CD8-positive, alpha-beta memory T cell (primary cell): ENCODE measurements at regions of chr15 and their contacts with region 1.

Region 1: GRCh38 chr15:90233376-90234095 is at the start of gene CIB1:
- DNase-seq: peak; percentile 94 to 99 (median 97)
- H3K4me3 ChIP-seq: peak within 1 kb of the TSS; percentile 90
- H3K4me3 Mint-ChIP-seq: peak within 1 kb of the TSS; percentile 84 to 98 (median 91)
- H3K27ac ChIP-seq: peak within 1 kb of the TSS; percentile 92
- H3K27ac Mint-ChIP-seq: peak within 1 kb of the TSS; percentile 96 to 100 (median 100)
- H3K4me1 ChIP-seq: peaks cover 51% of the 10 kb centered on the region
- H3K4me1 Mint-ChIP-seq: peaks cover 57 to 65% (median 60%) of the 10 kb centered on the region in 3 donors
- H3K27me3 ChIP-seq: no peaks in the 10 kb centered on the region
- H3K27me3 Mint-ChIP-seq: peaks cover 0 to 1% of the 10 kb centered on the region in 2 donors
- total RNA-seq, gene CIB1: 162 to 166 TPM

Region 2: GRCh38 chr15:90101969-90102890 is 131.3 kb before region 1 on chr15 and contains the start of gene IDH2:
- CTCF ChIA-PET with region 1: interaction called, 4 read pairs
- POLR2A ChIA-PET with region 1: interaction called, 11 read pairs
- DNase-seq: peak; percentile 67 to 79 (median 73)
- H3K4me3 ChIP-seq: peak within 1 kb of the TSS; percentile 68
- H3K4me3 Mint-ChIP-seq: peak within 1 kb of the TSS; percentile 88 to 98 (median 92)
- H3K27ac ChIP-seq: peak within 1 kb of the TSS; percentile 63
- H3K27ac Mint-ChIP-seq: peak within 1 kb of the TSS; percentile 96 to 100 (median 99)
- H3K4me1 ChIP-seq: peaks cover 44% of the 10 kb centered on the region
- H3K4me1 Mint-ChIP-seq: peaks cover 47 to 57% (median 54%) of the 10 kb centered on the region in 3 donors
- H3K27me3 ChIP-seq: no peaks in the 10 kb centered on the region
- H3K27me3 Mint-ChIP-seq: no peaks in the 10 kb centered on the region
- total RNA-seq, gene IDH2: 72.8 to 73.8 TPM

Region 3: DNA sequence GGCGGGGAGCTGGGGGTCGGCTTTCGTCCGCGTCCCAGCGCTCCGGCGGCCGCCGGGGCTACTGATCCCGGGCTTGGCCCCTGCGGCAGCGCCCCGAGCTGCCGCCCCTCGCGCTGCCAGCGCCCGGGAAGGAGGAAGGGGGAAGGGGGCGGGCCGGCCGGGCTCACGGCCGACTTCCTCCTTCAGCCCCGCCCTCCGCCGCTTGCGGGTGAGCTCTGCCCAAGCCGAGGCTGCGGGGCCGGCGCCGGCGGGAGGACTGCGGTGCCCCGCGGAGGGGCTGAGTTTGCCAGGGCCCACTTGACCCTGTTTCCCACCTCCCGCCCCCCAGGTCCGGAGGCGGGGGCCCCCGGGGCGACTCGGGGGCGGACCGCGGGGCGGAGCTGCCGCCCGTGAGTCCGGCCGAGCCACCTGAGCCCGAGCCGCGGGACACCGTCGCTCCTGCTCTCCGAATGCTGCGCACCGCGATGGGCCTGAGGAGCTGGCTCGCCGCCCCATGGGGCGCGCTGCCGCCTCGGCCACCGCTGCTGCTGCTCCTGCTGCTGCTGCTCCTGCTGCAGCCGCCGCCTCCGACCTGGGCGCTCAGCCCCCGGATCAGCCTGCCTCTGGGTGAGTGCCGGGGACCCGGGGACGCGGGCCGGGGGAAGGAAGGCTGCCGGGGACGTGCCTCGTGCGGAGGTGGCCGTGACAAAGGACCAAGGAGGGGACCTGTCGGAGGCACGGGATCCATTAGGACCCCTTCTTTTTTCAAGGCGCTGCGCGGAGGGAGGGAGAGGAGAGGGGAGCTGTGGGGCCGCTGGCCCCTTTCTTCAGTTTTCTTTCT is 32.2 kb before region 1 on chr15 and contains the start of gene SEMA4B:
- CTCF ChIA-PET with region 1: interaction called, 9 read pairs
- POLR2A ChIA-PET with region 1: interaction called, 39 read pairs
- DNase-seq: peak; percentile 65 to 81 (median 73)
- H3K4me3 ChIP-seq: peak within 1 kb of the TSS; percentile 74
- H3K4me3 Mint-ChIP-seq: peak within 1 kb of the TSS; percentile 82 to 96 (median 88)
- H3K27ac ChIP-seq: peak within 1 kb of the TSS; percentile 57
- H3K27ac Mint-ChIP-seq: peak within 1 kb of the TSS; percentile 60 to 97 (median 88)
- H3K4me1 ChIP-seq: peaks cover 24% of the 10 kb centered on the region
- H3K4me1 Mint-ChIP-seq: peaks cover 15 to 30% (median 23%) of the 10 kb centered on the region in 3 donors
- H3K27me3 ChIP-seq: no peaks in the 10 kb centered on the region
- H3K27me3 Mint-ChIP-seq: no peaks in the 10 kb centered on the region
- total RNA-seq, gene SEMA4B: 6.9 to 8.8 TPM

Region 4: DNA sequence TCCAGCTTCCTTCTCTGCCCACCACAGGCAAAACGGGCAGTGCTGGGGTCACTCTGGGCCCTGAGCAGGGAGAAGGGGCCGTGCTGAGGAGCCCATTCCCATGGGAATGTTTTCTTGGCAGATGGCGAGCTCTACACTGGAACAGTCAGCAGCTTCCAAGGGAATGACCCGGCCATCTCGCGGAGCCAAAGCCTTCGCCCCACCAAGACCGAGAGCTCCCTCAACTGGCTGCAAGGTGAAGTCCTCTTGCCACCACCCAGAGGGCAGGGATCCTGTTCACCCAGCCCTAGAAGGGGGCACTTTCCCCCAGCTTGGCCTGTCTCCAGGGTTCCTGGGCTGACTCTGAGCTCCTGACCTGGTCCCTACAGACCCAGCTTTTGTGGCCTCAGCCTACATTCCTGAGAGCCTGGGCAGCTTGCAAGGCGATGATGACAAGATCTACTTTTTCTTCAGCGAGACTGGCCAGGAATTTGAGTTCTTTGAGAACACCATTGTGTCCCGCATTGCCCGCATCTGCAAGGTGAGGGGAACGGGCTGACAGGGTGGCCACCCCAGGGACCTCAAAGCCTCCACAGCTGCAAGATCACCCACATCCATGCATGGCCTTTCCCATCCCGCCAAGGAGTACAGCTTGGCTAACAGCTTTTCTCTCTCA is 12.2 kb before region 1 on chr15:
- CTCF ChIA-PET with region 1: interaction called, 10 read pairs
- POLR2A ChIA-PET with region 1: interaction called, 4 read pairs
- DNase-seq: no peak
- H3K4me3 ChIP-seq: no peak overlapping the region
- H3K4me3 Mint-ChIP-seq: no peak overlapping the region
- H3K27ac ChIP-seq: no peak overlapping the region
- H3K27ac Mint-ChIP-seq: peak overlapping the region in 1 of 8 donors; percentile 33
- H3K4me1 ChIP-seq: no peaks in the 10 kb centered on the region
- H3K4me1 Mint-ChIP-seq: peaks cover 6 to 17% (median 8%) of the 10 kb centered on the region in 3 donors
- H3K27me3 ChIP-seq: no peaks in the 10 kb centered on the region
- H3K27me3 Mint-ChIP-seq: no peaks in the 10 kb centered on the region

Region 5: GRCh38 chr15:90249203-90249863 is 15.8 kb after region 1 on chr15 and contains the start of gene TTLL13:
- CTCF ChIA-PET with region 1: interaction called, 5 read pairs
- POLR2A ChIA-PET with region 1: interaction called, 11 read pairs
- DNase-seq: peak; percentile 27 to 79 (median 56)
- H3K4me3 ChIP-seq: peak within 1 kb of the TSS; percentile 53
- H3K4me3 Mint-ChIP-seq: peak within 1 kb of the TSS; percentile 71 to 86 (median 76)
- H3K27ac ChIP-seq: no peak within 1 kb of the TSS
- H3K27ac Mint-ChIP-seq: peak within 1 kb of the TSS in 7 of 8 donors; percentile 35 to 93 (median 70)
- H3K4me1 ChIP-seq: peaks cover 4% of the 10 kb centered on the region
- H3K4me1 Mint-ChIP-seq: peaks cover 12 to 20% (median 15%) of the 10 kb centered on the region in 3 donors
- H3K27me3 ChIP-seq: no peaks in the 10 kb centered on the region
- H3K27me3 Mint-ChIP-seq: no peaks in the 10 kb centered on the region
- total RNA-seq, gene TTLL13: 0.80 TPM in 1 of 2 experiments, not detected in the other

Region 6: DNA sequence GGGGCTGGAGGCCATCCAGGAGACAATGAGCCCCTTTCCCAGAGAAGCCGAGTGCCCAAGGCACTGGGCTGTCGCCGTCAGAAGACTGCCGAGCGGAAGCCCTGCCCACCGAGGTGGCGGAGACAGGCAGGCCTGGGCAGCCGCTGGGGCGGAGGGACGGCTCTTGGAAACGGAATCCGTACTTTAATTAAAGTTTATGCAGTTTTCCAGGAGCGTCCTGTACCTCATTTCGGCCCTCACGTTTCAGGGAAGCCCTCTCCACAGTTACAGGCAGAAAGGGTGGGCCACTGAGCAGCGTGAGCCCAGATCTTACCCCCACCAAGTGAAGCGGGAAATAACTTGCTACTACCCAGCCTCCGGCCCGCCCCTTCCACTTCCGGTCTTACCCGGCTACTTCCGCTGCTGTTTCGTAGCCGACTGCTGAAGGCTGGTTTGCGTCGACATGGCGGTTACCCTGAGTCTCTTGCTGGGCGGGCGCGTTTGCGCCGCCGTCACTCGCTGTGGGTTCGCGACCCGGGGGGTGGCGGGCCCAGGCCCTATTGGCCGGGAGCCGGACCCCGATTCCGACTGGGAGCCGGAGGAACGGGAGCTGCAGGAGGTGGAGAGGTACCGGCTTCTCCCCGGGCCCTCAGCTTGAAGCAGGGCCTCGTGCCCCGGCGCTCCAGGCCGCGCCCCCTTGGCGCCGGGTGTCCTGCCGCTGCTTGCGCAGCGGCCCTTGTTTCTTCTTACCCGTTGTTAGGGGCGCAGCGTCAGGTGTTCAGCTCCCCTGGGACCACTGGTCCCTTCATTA is 31.9 kb after region 1 on chr15 and contains the start of gene NGRN:
- CTCF ChIA-PET with region 1: interaction called, 8 read pairs
- POLR2A ChIA-PET with region 1: interaction called, 15 read pairs
- DNase-seq: peak; percentile 85 to 95 (median 92)
- H3K4me3 ChIP-seq: peak within 1 kb of the TSS; percentile 87
- H3K4me3 Mint-ChIP-seq: peak within 1 kb of the TSS; percentile 94 to 99 (median 96)
- H3K27ac ChIP-seq: peak within 1 kb of the TSS; percentile 96
- H3K27ac Mint-ChIP-seq: peak within 1 kb of the TSS; percentile 95 to 100 (median 100)
- H3K4me1 ChIP-seq: peaks cover 44% of the 10 kb centered on the region
- H3K4me1 Mint-ChIP-seq: peaks cover 47 to 56% (median 53%) of the 10 kb centered on the region in 3 donors
- H3K27me3 ChIP-seq: no peaks in the 10 kb centered on the region
- H3K27me3 Mint-ChIP-seq: no peaks in the 10 kb centered on the region
- total RNA-seq, gene NGRN: 34.1 to 36.0 TPM

Region 7: GRCh38 chr15:90320061-90320884 is 86.7 kb after region 1 on chr15:
- CTCF ChIA-PET with region 1: no interaction called
- POLR2A ChIA-PET with region 1: no interaction called
- DNase-seq: peak; percentile 46 to 78 (median 61)
- H3K4me3 ChIP-seq: no peak overlapping the region
- H3K4me3 Mint-ChIP-seq: no peak overlapping the region
- H3K27ac ChIP-seq: no peak overlapping the region
- H3K27ac Mint-ChIP-seq: no peak overlapping the region
- H3K4me1 ChIP-seq: peaks cover 6% of the 10 kb centered on the region
- H3K4me1 Mint-ChIP-seq: peaks cover 5 to 9% (median 6%) of the 10 kb centered on the region in 3 donors
- H3K27me3 ChIP-seq: no peaks in the 10 kb centered on the region
- H3K27me3 Mint-ChIP-seq: peaks cover 0 to 1% of the 10 kb centered on the region in 2 donors

Region 8: DNA sequence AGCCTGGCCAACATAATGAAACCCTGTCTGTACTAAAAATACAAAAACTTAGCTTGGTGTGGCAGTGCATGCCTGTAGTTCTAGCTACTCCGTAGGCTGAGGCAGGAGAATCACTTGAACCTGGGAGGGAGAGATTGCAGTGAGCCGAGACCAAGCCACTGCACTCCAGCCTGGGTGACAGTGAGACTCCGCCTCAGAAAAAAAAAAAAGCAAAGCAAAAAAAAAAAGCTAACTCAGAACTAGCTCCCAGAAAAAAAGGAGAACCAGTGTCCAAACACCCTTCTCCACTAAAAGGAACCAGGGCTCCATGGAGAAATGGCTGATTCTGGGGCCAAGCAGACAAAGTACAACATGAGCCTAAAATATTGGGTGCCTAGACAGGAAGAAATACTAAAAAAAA is 279.4 kb after region 1 on chr15:
- CTCF ChIA-PET with region 1: no interaction called
- POLR2A ChIA-PET with region 1: no interaction called
- DNase-seq: no peak
- H3K4me3 ChIP-seq: no peak overlapping the region
- H3K4me3 Mint-ChIP-seq: no peak overlapping the region
- H3K27ac ChIP-seq: no peak overlapping the region
- H3K27ac Mint-ChIP-seq: no peak overlapping the region
- H3K4me1 ChIP-seq: no peaks in the 10 kb centered on the region
- H3K4me1 Mint-ChIP-seq: peaks cover 8 to 10% (median 9%) of the 10 kb centered on the region in 3 donors
- H3K27me3 ChIP-seq: no peaks in the 10 kb centered on the region
- H3K27me3 Mint-ChIP-seq: peaks cover 0 to 3% of the 10 kb centered on the region in 2 donors